ENCODE measurements at regions of chr22 and their contacts with region 1.

Region 1: DNA sequence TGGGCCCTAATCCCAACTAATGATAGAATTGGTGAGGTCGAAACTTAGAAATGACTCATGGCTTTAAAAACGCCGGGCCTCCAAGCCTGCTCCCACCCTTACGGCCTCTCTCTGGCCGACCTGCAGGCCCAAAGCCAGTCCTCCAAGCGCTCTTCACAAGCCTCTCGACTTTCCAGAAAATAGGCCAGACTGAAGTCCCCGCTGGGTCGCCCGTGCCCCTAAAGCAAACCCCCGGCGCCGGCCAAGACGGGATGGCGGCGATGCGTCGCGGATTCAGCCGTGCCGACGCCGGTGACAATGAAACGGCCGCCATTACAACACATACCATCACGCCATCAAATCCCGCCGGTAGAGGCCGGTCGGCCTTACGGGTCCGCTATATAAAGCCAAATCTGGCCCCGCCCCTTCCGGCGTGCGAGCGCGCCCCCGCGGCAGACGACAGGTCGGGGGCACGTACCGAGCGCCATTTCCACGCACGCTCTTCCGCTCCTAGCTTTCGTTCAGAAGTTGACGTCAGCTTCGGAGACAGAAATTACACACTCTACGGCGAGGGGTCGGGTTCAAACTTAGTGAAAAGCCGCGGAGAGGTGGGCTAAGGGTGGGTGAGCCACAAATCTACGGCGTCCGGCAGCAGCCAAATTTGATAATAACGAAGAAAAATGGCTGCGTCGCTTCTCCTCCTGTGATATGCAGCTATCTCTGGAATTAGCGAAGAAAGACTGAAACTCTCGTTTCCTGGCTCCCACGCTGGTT is at the start of gene RPL3:
- DNase-seq: peak; percentile 98
- H3K4me3 ChIP-seq: peak within 1 kb of the TSS; percentile 94
- H3K27ac ChIP-seq: peak within 1 kb of the TSS; percentile 82
- H3K4me1 ChIP-seq: peaks cover 36% of the 10 kb centered on the region
- CTCF ChIP-seq: 0 out of 2 replicates have a peak, but pooled peaks have one; percentile 13
- total RNA-seq, gene RPL3: 2,313 and 2,662 TPM in 2 replicates

Region 2: GRCh38 chr22:39152511-39153219 is 166.8 kb before region 1 on chr22 and contains the start of gene CBX7:
- CTCF ChIA-PET with region 1: no interaction called
- POLR2A ChIA-PET with region 1: interaction called, 11 read pairs
- intact Hi-C with region 1: loop called (anchors 5 kb)
- DNase-seq: peak; percentile 91
- H3K4me3 ChIP-seq: peak within 1 kb of the TSS; percentile 74
- H3K27ac ChIP-seq: peak within 1 kb of the TSS; percentile 56
- H3K4me1 ChIP-seq: peaks cover 45% of the 10 kb centered on the region
- CTCF ChIP-seq: no peak
- total RNA-seq, gene CBX7: 7.3 and 11.9 TPM in 2 replicates

Region 3: GRCh38 chr22:39170825-39171622 is 148.4 kb before region 1 on chr22:
- CTCF ChIA-PET with region 1: interaction called, 3 read pairs
- POLR2A ChIA-PET with region 1: interaction called, 11 read pairs
- intact Hi-C with region 1: loop called (anchors 1 kb)
- DNase-seq: peak; percentile 91
- H3K4me3 ChIP-seq: peak overlapping the region; percentile 48
- H3K27ac ChIP-seq: peak overlapping the region; percentile 91
- H3K4me1 ChIP-seq: peaks cover 67% of the 10 kb centered on the region
- CTCF ChIP-seq: peak; percentile 97

Region 4: DNA sequence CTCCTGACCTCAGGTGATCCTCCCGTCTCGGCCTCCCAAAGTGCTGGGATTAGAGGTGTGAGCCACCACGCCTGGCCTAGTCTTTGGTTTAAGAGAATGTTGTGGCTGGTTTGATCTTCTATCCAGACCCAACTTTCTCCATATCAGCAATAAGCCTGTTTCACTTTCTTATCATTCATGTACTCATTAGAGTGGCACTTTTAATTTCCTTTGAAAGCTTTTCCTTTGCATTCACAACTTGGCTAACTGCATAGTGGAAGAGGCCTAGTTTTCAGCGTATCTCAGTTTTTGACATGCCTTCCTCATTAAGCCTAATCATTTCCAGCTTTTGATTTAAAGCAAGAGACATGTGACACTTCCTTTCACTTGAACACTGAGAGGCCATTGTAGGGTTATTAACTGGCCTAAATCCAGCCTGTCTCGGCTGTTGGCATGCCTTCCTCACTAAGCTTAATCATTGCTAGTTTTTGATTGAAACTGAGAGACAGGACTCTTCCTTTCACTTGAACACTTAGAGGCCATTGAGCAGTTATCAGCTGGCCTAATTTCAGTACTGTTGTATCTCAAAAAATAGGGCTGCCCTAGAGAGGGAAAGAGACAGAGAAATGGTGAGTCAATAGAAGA is 13.1 kb after region 1 on chr22:
- CTCF ChIA-PET with region 1: no interaction called
- POLR2A ChIA-PET with region 1: interaction called, 15 read pairs
- intact Hi-C with region 1: no loop called
- DNase-seq: no peak
- H3K4me3 ChIP-seq: no peak overlapping the region
- H3K27ac ChIP-seq: no peak overlapping the region
- H3K4me1 ChIP-seq: no peaks in the 10 kb centered on the region
- CTCF ChIP-seq: no peak

Region 5: DNA sequence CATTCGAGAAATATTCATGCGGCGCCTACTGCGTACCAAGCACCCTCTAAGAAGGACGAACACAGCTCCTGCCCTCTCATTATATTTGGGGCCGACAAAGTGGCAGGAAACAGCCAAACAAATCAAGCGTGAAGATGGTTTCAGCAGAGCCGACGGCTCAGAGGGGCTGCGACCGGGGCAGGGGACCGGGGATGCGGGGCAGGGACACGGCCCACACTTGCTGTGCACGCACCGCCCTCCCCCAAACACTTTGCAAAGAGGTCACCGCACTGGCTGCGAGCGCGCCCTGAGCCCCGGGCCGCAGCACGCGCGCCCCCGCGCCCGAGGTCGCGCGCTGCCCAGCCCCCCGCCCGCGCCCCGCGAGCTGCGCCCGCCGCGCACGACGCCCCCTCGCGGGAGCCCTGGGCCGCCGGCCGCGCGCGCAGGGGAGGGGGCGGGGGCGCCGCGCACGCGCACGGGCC is 30.1 kb after region 1 on chr22:
- CTCF ChIA-PET with region 1: no interaction called
- POLR2A ChIA-PET with region 1: interaction called, 9 read pairs
- intact Hi-C with region 1: loop called (anchors 1 kb)
- DNase-seq: peak; percentile 81
- H3K4me3 ChIP-seq: peak overlapping the region; percentile 75
- H3K27ac ChIP-seq: peak overlapping the region; percentile 68
- H3K4me1 ChIP-seq: peaks cover 32% of the 10 kb centered on the region
- CTCF ChIP-seq: no peak